Body of pancreas (tissue), 4 donors: ENCODE measurements at regions of chr6 and their contacts with region 1.

Region 1: GRCh38 chr6:108549732-108550131 is 11.0 kb upstream of the FOXO3 start:
- DNase-seq: no peak
- ATAC-seq: no peak
- H3K4me3 ChIP-seq: no peak overlapping the region
- H3K27ac ChIP-seq: no peak overlapping the region
- H3K4me1 ChIP-seq: no peaks in the 10 kb centered on the region
- H3K27me3 ChIP-seq: no peaks in the 10 kb centered on the region
- CTCF ChIP-seq: no peak
- POLR2A ChIP-seq: no peak

Region 2: DNA sequence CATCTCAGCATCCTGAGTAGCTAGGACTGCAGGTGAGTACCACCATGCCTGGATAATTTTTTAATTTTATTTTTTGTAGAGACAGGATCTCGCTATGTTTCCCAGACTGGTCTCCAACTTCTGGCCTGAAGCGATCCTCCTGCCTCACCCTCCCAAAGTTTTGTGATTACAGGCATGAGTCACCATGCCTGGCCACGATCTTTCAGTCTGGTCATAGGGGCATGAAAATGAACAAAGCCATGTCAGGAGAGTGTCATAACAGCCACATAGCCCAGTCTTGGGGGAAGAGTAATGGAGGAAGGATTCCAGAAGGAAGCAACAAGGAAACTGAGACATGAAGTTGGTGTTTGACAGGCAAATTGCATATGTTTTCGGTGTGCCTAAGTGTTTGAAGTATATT is 271.9 kb before region 1 on chr6:
- intact Hi-C with region 1: no loop called
- DNase-seq: no peak
- ATAC-seq: no peak
- H3K4me3 ChIP-seq: no peak overlapping the region
- H3K27ac ChIP-seq: no peak overlapping the region
- H3K4me1 ChIP-seq: no peaks in the 10 kb centered on the region
- H3K27me3 ChIP-seq: no peaks in the 10 kb centered on the region
- CTCF ChIP-seq: no peak
- POLR2A ChIP-seq: no peak

Region 3: DNA sequence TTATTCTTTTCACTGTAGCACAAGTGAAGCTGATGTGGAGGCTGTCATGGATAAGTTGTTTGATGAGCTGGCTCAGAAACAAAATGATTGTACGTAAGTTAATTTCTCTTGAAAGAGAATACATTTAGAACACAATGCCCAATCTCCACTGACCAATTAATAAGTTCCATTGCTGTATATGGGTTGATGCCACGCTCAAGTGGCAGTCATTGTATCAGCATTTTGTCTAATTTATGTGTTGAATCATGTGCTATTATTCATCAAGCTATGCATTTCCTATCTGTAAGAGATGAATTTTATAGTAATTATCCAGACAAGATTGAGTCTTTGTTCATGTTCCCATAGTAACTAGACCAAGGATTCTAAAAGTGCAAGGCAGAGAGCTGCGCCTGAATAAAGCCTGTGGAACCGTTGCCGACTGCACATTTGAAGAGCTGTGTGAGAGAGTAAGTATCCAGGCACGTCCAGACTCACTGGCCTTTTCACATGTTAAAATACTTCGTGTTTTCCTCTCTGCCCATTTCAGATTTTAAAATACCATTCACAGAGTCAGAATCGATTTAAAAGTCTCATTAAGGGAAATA is 72.8 kb before region 1 on chr6:
- intact Hi-C with region 1: no loop called
- DNase-seq: no peak
- ATAC-seq: no peak
- H3K4me3 ChIP-seq: no peak overlapping the region
- H3K27ac ChIP-seq: no peak overlapping the region
- H3K4me1 ChIP-seq: no peaks in the 10 kb centered on the region
- H3K27me3 ChIP-seq: no peaks in the 10 kb centered on the region
- CTCF ChIP-seq: no peak
- POLR2A ChIP-seq: no peak

Region 4: DNA sequence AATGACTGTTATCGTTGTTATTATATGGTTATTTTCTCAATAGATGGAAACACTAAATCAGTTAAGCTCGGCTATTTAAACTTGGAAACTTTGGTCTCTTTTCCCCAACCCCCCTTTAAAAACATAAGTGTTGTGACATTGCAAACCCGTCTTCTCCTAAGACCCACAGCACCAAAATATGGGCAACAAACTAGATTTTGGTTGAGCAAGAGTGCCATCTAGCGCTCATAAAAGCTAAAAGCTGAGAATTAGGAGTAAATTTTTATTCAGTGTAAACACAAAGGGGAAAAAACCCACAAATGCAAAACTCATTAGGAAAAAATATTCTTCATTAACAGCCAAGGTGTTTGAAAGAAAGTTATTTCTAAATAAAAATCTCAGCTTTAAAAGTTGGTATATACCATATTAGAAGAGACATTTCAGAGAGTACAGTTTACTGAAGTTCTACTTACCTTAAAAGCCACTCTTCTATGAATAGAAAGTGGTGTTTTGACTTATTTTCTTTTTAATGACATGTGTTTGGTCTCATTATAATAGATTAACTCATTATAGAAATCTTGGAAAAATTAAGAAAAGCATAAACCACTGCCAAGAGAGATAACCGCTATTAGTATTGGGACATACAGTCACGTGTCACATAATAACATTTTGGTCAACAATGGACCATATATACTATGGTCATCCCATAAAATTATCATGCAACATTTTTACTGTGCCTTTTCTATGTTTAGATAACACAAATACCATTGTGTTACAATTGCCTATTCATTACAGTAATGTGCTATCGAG is 523.8 kb after region 1 on chr6:
- intact Hi-C with region 1: loop called (anchors 5 kb)
- DNase-seq: peak in 3 of 4 donors; percentile 28 to 63 (median 35)
- ATAC-seq: no peak
- H3K4me3 ChIP-seq: no peak overlapping the region
- H3K27ac ChIP-seq: no peak overlapping the region
- H3K4me1 ChIP-seq: peaks cover 8% of the 10 kb centered on the region
- H3K27me3 ChIP-seq: no peaks in the 10 kb centered on the region
- CTCF ChIP-seq: peak; percentile 39 to 78 (median 69)
- POLR2A ChIP-seq: no peak

Region 5: DNA sequence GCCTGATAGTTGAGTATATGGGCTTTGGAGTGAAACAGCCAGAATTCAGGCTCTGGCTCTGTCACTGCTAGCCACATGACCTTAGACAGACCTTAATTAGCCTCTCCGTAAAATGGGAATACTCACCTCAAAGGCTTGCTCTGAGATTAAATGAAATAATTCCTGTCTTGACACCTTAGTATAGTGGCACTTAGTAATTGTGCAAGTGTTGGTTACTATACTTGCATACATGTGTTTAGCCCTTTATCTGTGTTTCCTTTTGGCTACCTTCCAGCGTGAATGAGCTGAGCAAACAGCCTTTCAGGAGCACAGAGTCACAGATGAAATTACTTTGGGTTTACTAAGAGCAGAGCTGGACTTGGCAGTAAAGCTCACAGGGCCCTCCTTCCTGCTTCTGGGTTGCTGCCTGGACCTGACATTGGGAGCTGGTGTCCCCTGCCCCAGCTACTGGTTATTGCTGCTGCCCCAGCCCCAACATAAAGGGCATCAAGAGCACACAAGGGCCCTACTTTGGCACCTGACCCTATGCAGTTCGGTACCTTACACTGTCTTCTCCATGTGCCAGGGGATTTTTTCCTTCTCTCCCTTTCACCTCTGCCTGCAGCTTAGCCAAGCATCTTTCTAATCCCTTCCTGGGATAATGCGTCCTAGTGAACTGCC is 799.8 kb after region 1 on chr6:
- intact Hi-C with region 1: no loop called
- DNase-seq: peak; percentile 61 to 89 (median 78)
- ATAC-seq: peak; percentile 97
- H3K4me3 ChIP-seq: no peak overlapping the region
- H3K27ac ChIP-seq: peak overlapping the region; percentile 62 to 79 (median 70)
- H3K4me1 ChIP-seq: peaks cover 17% of the 10 kb centered on the region
- H3K27me3 ChIP-seq: no peaks in the 10 kb centered on the region
- CTCF ChIP-seq: no peak
- POLR2A ChIP-seq: peak in 1 of 3 donors; percentile 15